B cell (primary cell): ENCODE measurements at regions of chr2 and their contacts with region 1.

Region 1: GRCh38 chr2:213104092-213104902 is 47.1 kb downstream of the IKZF2 start:
- DNase-seq: no peak
- ATAC-seq: no peak
- H3K4me3 ChIP-seq: peak overlapping the region in 1 of 5 experiments; percentile 20
- H3K4me3 Mint-ChIP-seq: peak overlapping the region; percentile 51
- H3K27ac ChIP-seq: peak overlapping the region in 1 of 2 donors; percentile 19
- H3K27ac Mint-ChIP-seq: no peak overlapping the region
- H3K4me1 ChIP-seq: peaks cover 7 to 21% of the 10 kb centered on the region in 2 donors
- H3K4me1 Mint-ChIP-seq: peaks cover 40% of the 10 kb centered on the region
- H3K27me3 ChIP-seq: no peaks in the 10 kb centered on the region
- H3K27me3 Mint-ChIP-seq: no peaks in the 10 kb centered on the region
- CTCF ChIP-seq: no peak

Region 2: DNA sequence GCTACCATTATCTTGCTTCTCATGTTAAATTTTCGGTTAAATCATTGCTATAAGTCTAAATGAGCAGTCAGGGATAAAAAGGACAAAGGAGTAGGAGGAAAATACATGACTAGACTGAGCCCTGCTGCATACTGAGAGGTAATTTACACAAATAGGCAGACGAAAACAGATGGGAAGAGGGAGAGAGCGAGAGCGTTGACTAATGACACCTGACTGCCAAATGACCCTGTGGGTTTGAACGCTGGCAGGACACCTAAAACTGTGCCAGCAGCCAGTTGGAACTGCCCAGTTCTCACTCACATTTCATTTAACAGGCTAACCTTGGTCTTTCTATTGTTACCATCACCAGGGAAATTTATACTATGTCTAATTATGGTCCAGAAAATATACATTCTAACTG is 1569.7 kb before region 1 on chr2:
- CTCF ChIA-PET with region 1: no interaction called
- POLR2A ChIA-PET with region 1: no interaction called
- intact Hi-C with region 1: no loop called
- DNase-seq: no peak
- ATAC-seq: no peak
- H3K4me3 ChIP-seq: no peak overlapping the region
- H3K4me3 Mint-ChIP-seq: no peak overlapping the region
- H3K27ac ChIP-seq: no peak overlapping the region
- H3K27ac Mint-ChIP-seq: no peak overlapping the region
- H3K4me1 ChIP-seq: no peaks in the 10 kb centered on the region
- H3K4me1 Mint-ChIP-seq: no peaks in the 10 kb centered on the region
- H3K27me3 ChIP-seq: no peaks in the 10 kb centered on the region
- H3K27me3 Mint-ChIP-seq: no peaks in the 10 kb centered on the region
- CTCF ChIP-seq: no peak

Region 3: GRCh38 chr2:212882626-212883025 is 221.7 kb before region 1 on chr2:
- CTCF ChIA-PET with region 1: no interaction called
- POLR2A ChIA-PET with region 1: no interaction called
- intact Hi-C with region 1: no loop called
- DNase-seq: no peak
- ATAC-seq: no peak
- H3K4me3 ChIP-seq: no peak overlapping the region
- H3K4me3 Mint-ChIP-seq: no peak overlapping the region
- H3K27ac ChIP-seq: no peak overlapping the region
- H3K27ac Mint-ChIP-seq: no peak overlapping the region
- H3K4me1 ChIP-seq: no peaks in the 10 kb centered on the region
- H3K4me1 Mint-ChIP-seq: peaks cover 7% of the 10 kb centered on the region
- H3K27me3 ChIP-seq: no peaks in the 10 kb centered on the region
- H3K27me3 Mint-ChIP-seq: no peaks in the 10 kb centered on the region
- CTCF ChIP-seq: no peak

Region 4: GRCh38 chr2:213057977-213058376 is 46.3 kb before region 1 on chr2:
- CTCF ChIA-PET with region 1: no interaction called
- POLR2A ChIA-PET with region 1: no interaction called
- intact Hi-C with region 1: loop called (anchors 10 kb)
- DNase-seq: no peak
- ATAC-seq: no peak
- H3K4me3 ChIP-seq: no peak overlapping the region
- H3K4me3 Mint-ChIP-seq: no peak overlapping the region
- H3K27ac ChIP-seq: no peak overlapping the region
- H3K27ac Mint-ChIP-seq: no peak overlapping the region
- H3K4me1 ChIP-seq: no peaks in the 10 kb centered on the region
- H3K4me1 Mint-ChIP-seq: peaks cover 11% of the 10 kb centered on the region
- H3K27me3 ChIP-seq: no peaks in the 10 kb centered on the region
- H3K27me3 Mint-ChIP-seq: no peaks in the 10 kb centered on the region
- CTCF ChIP-seq: no peak

Region 5: DNA sequence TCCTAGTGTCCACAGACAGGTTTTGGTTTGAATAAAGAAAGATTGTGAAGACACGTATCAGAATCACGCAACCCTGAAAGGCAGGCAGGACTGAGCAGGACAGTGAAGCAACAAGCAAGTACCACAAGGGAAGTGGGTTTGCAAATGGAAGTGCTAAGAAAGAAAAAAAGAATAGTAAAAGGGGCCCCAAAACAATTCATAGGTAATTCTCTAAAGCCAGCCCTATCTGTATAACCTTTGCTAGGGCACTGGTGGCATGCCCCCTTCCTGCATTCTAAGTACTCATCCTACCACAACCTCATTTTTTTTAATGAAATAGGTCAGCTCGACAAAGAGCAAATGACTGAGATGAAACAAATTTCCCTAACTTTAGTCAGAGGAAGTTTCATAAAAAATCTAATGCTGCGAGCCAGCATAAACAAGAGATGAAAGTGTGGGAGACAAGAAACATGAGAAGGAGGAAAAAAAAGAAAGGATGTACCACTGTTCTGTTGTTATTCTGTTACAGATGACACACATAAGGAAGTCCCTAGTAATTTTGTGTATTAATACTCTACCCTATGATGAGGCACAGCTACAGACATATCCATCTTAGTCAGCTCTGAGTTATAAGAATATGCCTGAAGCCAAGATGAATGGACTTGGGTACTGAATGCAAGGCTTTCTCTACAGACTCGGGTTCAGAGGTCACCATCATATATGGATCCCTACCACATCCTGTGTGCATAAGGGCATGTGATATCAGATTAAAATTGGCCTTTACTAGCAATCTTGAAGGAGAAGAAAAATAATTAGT is 15.0 kb after region 1 on chr2:
- CTCF ChIA-PET with region 1: no interaction called
- POLR2A ChIA-PET with region 1: no interaction called
- intact Hi-C with region 1: loop called (anchors 2 kb)
- DNase-seq: peak; percentile 43
- ATAC-seq: peak; percentile 57
- H3K4me3 ChIP-seq: peak overlapping the region in 1 of 5 experiments; percentile 16
- H3K4me3 Mint-ChIP-seq: peak overlapping the region; percentile 71
- H3K27ac ChIP-seq: peak overlapping the region; percentile 37 to 69
- H3K27ac Mint-ChIP-seq: peak overlapping the region; percentile 33
- H3K4me1 ChIP-seq: peaks cover 17 to 21% of the 10 kb centered on the region in 2 donors
- H3K4me1 Mint-ChIP-seq: peaks cover 40% of the 10 kb centered on the region
- H3K27me3 ChIP-seq: no peaks in the 10 kb centered on the region
- H3K27me3 Mint-ChIP-seq: no peaks in the 10 kb centered on the region
- CTCF ChIP-seq: no peak